ENCODE measurements at regions of chr10 and their contacts with region 1.

Region 1: GRCh38 chr10:14982744-14983143 is 23.6 kb downstream of the MEIG1 start:
- DNase-seq: no peak
- H3K4me3 ChIP-seq: no peak overlapping the region
- H3K27ac ChIP-seq: no peak overlapping the region
- H3K4me1 ChIP-seq: no peaks in the 10 kb centered on the region
- H3K27me3 ChIP-seq: no peaks in the 10 kb centered on the region
- CTCF ChIP-seq: no peak

Region 2: GRCh38 chr10:14200698-14201544 is 781.8 kb before region 1 on chr10:
- intact Hi-C with region 1: loop called (anchors 10 kb)
- DNase-seq: no peak
- H3K4me3 ChIP-seq: no peak overlapping the region
- H3K27ac ChIP-seq: no peak overlapping the region
- H3K4me1 ChIP-seq: no peaks in the 10 kb centered on the region
- H3K27me3 ChIP-seq: peaks cover 0 to 44% of the 10 kb centered on the region in 2 donors
- CTCF ChIP-seq: no peak

Measured in tibial artery (tissue), 4 donors.